Caco-2 (cell line): ENCODE measurements at regions of chr1 and their contacts with region 1.

Region 1: GRCh38 chr1:52141513-52142219 is at the start of gene ZFYVE9:
- DNase-seq: peak; percentile 65 to 89
- H3K4me3 ChIP-seq: peak within 1 kb of the TSS; percentile 88
- H3K4me3 Mint-ChIP-seq: peak within 1 kb of the TSS; percentile 81
- H3K27ac Mint-ChIP-seq: peak within 1 kb of the TSS; percentile 71
- H3K4me1 ChIP-seq: peaks cover 9% of the 10 kb centered on the region
- H3K4me1 Mint-ChIP-seq: peaks cover 14% of the 10 kb centered on the region
- H3K27me3 ChIP-seq: no peaks in the 10 kb centered on the region
- H3K27me3 Mint-ChIP-seq: no peaks in the 10 kb centered on the region
- CTCF ChIP-seq: peak; percentile 46 to 55
- total RNA-seq, gene ZFYVE9: 18.0 and 18.4 TPM in 2 replicates

Region 2: DNA sequence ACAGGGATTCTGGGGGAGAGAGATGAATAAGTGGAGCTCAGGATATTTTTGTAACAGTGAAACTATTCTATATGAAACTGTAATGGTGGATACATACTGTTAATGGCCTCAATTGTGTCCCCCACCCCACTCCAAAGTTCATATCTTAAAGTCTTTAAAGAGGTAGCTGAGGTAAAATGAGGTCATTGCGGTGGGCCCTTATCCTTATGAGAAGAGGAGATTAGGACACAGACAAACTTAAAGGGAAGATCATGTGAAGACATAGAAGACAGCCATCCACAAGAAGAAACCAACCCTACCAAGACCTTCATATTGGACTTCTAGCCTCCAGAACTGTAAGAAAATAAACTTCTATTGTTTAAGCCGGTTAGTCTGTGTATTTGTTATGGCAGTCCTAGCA is 96.4 kb before region 1 on chr1:
- CTCF ChIA-PET with region 1: no interaction called
- POLR2A ChIA-PET with region 1: no interaction called
- intact Hi-C with region 1: no loop called
- DNase-seq: no peak
- H3K4me3 ChIP-seq: no peak overlapping the region
- H3K4me3 Mint-ChIP-seq: no peak overlapping the region
- H3K27ac Mint-ChIP-seq: no peak overlapping the region
- H3K4me1 ChIP-seq: no peaks in the 10 kb centered on the region
- H3K4me1 Mint-ChIP-seq: no peaks in the 10 kb centered on the region
- H3K27me3 ChIP-seq: no peaks in the 10 kb centered on the region
- H3K27me3 Mint-ChIP-seq: no peaks in the 10 kb centered on the region
- CTCF ChIP-seq: no peak

Region 3: DNA sequence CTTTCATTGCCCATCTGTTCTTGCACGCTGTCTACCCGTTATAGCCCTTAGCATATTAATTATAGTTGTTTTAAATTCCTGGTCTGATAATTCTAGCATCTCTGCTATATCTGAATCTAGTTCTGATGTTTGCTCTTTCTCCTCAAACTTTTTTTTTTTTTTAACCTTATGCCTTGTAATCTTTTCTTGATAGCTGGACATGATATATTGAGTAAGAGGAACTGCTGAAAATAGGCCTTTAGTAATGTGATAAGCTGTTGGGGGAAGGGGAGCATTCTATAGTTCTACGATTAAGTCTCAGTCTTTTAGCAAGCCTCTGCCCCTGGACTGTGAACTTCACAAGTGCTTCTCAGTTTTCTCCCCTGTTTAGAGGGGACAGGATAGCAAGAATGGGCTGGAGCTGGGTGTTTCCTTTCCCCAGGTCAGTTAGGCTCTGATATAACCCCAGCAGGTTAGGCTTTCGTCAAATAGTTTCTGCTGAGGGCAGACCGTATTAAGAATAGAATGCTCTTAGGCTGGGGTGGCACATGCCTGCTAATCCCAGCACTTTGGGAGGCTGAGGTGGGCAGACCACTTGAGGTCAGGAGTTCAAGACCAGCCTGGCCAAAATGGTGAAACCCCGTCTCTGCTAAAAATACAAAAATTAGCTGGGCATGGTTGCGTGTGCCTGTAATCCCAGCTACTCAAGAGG is 62.4 kb after region 1 on chr1:
- CTCF ChIA-PET with region 1: no interaction called
- POLR2A ChIA-PET with region 1: no interaction called
- intact Hi-C with region 1: no loop called
- DNase-seq: no peak
- H3K4me3 ChIP-seq: no peak overlapping the region
- H3K4me3 Mint-ChIP-seq: no peak overlapping the region
- H3K27ac Mint-ChIP-seq: no peak overlapping the region
- H3K4me1 ChIP-seq: no peaks in the 10 kb centered on the region
- H3K4me1 Mint-ChIP-seq: no peaks in the 10 kb centered on the region
- H3K27me3 ChIP-seq: no peaks in the 10 kb centered on the region
- H3K27me3 Mint-ChIP-seq: no peaks in the 10 kb centered on the region
- CTCF ChIP-seq: no peak

Region 4: DNA sequence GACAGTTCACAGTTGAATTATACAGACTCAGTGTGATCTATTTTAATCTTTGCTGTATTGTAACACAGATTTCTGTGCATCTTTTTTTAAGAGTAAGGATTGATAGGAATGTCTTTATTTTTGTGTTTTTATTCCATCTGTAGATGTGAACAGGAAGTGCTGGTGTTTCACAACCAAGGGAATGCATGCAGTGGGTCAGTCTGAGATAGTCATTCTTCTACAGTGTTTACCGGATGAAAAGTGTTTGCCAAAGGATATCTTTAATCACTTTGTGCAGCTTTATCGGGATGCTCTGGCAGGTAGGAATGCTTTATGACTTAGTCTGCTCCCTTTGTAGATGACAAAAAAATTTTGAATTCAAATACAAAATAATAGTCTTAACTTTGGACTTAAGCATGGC is 139.9 kb after region 1 on chr1:
- CTCF ChIA-PET with region 1: no interaction called
- POLR2A ChIA-PET with region 1: no interaction called
- intact Hi-C with region 1: loop called (anchors 5 kb)
- DNase-seq: peak; percentile 50 to 67
- H3K4me3 ChIP-seq: no peak overlapping the region
- H3K4me3 Mint-ChIP-seq: peak overlapping the region; percentile 21
- H3K27ac Mint-ChIP-seq: peak overlapping the region; percentile 59
- H3K4me1 ChIP-seq: peaks cover 32% of the 10 kb centered on the region
- H3K4me1 Mint-ChIP-seq: peaks cover 18% of the 10 kb centered on the region
- H3K27me3 ChIP-seq: no peaks in the 10 kb centered on the region
- H3K27me3 Mint-ChIP-seq: no peaks in the 10 kb centered on the region
- CTCF ChIP-seq: no peak

Region 5: DNA sequence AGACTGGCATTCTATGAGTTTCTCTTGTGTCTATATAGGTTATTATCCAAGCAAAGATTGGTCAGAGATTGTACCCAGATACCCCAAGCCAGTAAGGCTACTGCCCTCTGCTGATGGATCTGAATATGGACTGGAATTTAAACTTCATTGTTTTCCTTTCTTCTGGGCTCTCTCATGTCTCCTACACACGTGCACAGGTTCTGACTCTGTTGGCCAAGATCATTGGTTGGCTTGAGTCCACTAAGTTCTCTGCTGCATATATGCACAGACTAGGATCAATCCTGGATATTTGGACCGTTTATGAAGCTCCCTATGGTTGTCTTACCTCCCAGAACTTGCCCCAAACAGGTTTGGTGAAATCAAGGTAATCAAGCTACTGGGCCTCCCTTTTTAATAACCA is 154.7 kb after region 1 on chr1:
- CTCF ChIA-PET with region 1: no interaction called
- POLR2A ChIA-PET with region 1: no interaction called
- intact Hi-C with region 1: loop called (anchors 1 kb)
- DNase-seq: peak in 1 of 2 experiments; percentile 60
- H3K4me3 ChIP-seq: no peak overlapping the region
- H3K4me3 Mint-ChIP-seq: no peak overlapping the region
- H3K27ac Mint-ChIP-seq: no peak overlapping the region
- H3K4me1 ChIP-seq: no peaks in the 10 kb centered on the region
- H3K4me1 Mint-ChIP-seq: no peaks in the 10 kb centered on the region
- H3K27me3 ChIP-seq: no peaks in the 10 kb centered on the region
- H3K27me3 Mint-ChIP-seq: no peaks in the 10 kb centered on the region
- CTCF ChIP-seq: peak; percentile 68 to 74